Heart right ventricle (tissue), 16 donors: ENCODE measurements at regions of chr3 and their contacts with region 1.

Region 1: DNA sequence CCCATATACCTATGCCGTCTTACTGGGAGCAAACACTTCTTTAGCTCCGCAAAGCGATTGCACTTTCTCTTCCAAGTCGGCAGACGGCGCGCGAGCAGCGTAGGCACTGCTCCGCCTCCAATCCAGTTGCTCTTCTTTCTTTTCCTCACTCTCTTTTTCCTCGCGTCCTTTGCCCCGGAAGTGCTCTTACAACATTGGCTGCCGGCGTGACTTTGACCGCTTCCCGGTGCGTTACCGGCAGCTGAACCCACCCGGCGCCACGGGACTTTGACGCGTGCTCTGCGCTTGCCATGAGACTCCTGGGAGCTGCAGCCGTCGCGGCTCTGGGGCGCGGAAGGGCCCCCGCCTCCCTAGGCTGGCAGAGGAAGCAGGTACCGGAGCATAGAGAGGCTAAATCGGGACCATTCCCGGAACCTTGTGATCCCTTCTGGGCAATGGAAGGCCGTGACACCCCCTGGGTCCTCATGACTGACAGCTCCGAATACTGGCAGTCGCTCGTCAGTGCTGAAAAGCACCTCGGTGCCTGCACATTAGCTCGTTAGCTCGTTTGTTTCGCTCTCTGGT is at the start of gene GFM1:
- DNase-seq: peak; percentile 88 to 94
- ATAC-seq: peak; percentile 96 to 99 (median 98)
- H3K4me3 ChIP-seq: peak within 1 kb of the TSS; percentile 55 to 86 (median 78)
- H3K27ac ChIP-seq: peak within 1 kb of the TSS; percentile 76 to 92 (median 88)
- H3K4me1 ChIP-seq: peaks cover 4 to 40% (median 22%) of the 10 kb centered on the region in 9 donors
- H3K27me3 ChIP-seq: no peaks in the 10 kb centered on the region
- CTCF ChIP-seq: peak; percentile 58 to 97 (median 89)
- total RNA-seq, gene GFM1: 46.9 to 86.4 (median 70.0) TPM

Region 2: DNA sequence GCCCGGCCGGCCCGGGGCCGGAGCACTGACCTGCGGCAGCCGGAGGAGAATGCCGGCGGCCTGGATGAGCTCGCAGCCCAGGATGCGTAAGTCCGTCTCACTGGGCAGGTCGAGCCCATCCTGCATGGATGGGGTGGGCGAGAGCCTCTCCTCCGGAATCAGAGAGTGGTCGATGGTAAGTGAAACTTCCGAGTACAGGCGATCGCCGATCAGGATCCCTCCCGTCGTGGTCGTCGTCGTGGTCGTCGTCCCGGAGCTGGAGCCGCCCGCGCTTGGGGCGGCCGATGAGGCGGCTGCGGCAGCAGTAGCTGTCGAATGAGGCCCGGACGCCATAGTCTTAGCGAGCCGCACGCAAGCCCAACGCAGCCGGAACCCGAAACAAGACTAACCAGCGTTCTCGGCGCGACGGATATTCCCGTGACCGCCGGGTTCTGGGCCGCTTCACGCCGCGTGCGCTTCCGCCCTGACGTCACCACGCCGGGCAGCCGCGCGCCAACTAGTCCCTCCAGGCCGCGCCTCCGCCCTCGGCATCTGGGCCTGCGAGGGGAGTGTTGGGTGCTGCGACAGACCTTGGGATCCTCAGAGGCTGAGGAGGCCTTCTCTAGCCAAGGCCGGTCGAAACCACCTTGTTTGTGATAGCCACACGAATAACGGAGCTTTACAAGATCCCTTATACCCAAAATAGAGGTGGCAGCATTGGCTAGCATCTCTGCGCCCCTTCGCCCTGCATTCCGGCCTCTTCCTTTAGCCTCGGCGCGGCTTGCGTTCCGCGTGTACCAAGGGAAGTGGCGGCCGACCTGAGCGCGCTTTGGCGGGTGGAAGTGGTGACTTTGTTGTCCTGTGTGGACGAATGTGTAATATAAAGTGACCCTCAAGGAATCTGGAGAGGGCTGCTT is 1484.4 kb before region 1 on chr3 and contains the start of gene CCNL1:
- intact Hi-C with region 1: loop called in 1 of 10 experiments (anchors 10 kb)
- DNase-seq: peak; percentile 97
- ATAC-seq: peak; percentile 93 to 97 (median 96)
- H3K4me3 ChIP-seq: peak within 1 kb of the TSS; percentile 87 to 100 (median 96)
- H3K27ac ChIP-seq: peak within 1 kb of the TSS; percentile 97 to 100 (median 100)
- H3K4me1 ChIP-seq: peaks cover 9 to 61% (median 51%) of the 10 kb centered on the region in 9 donors
- H3K27me3 ChIP-seq: no peaks in the 10 kb centered on the region
- CTCF ChIP-seq: no peak
- total RNA-seq, gene CCNL1: 19.1 to 52.5 (median 24.7) TPM

Region 3: GRCh38 chr3:158539414-158540014 is 104.9 kb before region 1 on chr3:
- intact Hi-C with region 1: loop called in 6 of 10 experiments (anchors 5 to 10 kb)
- DNase-seq: peak in 1 of 2 donors; percentile 21
- ATAC-seq: peak in 2 of 8 donors; percentile 37 to 54
- H3K4me3 ChIP-seq: no peak overlapping the region
- H3K27ac ChIP-seq: no peak overlapping the region
- H3K4me1 ChIP-seq: no peaks in the 10 kb centered on the region
- H3K27me3 ChIP-seq: no peaks in the 10 kb centered on the region
- CTCF ChIP-seq: peak; percentile 30 to 73 (median 58)

Region 4: DNA sequence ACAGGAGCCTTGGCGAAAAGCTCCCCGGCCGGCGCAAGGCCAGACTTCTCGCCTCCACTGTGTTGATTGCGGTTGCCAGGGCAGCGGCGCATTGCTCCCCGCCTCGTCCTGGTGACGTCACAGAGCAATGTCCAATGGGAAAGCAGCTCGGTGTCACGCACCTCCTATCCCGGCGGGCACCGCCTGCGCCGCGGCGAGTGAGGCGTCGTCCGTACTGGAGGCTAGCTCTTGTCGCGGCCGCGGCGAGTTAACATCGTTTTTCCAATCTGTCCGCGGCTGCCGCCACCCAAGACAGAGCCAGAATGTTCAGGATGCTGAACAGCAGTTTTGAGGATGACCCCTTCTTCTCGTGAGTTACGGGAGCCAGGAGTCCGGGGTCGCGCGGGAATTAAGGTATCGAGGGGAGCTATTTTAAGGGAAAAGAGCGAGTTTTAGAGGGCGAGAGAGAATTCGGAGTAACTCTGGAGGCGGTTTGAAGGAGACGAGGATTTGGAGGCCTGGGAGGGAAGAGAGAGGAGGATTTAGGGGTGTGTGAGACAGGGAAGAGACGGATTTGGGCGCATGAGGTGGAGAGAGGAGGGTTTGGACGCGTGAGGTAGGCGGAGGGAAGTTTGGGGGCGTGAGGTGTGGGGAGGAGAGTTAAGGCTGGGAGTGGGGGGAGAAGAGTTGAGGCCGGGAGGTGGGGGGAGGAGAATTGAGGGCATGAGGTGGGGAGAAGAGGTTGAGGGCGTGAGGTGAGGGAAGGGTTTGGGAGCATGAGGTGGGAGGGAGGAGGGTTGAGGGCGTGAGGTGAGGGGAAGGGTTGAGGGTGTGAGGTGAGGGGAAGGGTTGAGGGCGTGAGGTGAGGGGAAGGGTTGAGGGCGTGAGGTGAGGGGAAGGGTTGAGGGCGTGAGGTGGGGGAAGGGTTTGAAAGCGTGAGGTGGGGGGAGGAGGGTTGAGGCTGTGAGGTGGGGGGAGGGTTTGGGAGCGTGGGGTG is 73.1 kb before region 1 on chr3 and contains the start of gene MLF1:
- intact Hi-C with region 1: loop called in 4 of 10 experiments (anchors 5 to 10 kb)
- DNase-seq: peak; percentile 97 to 98
- ATAC-seq: peak; percentile 99 to 100 (median 99)
- H3K4me3 ChIP-seq: peak within 1 kb of the TSS; percentile 57 to 92 (median 66)
- H3K27ac ChIP-seq: peak within 1 kb of the TSS; percentile 67 to 91 (median 80)
- H3K4me1 ChIP-seq: peaks cover 0 to 37% (median 14%) of the 10 kb centered on the region in 9 donors
- H3K27me3 ChIP-seq: peaks cover 0 to 16% (median 0%) of the 10 kb centered on the region in 7 donors
- CTCF ChIP-seq: no peak
- total RNA-seq, gene MLF1: 78.4 to 257 (median 121) TPM

Region 5: DNA sequence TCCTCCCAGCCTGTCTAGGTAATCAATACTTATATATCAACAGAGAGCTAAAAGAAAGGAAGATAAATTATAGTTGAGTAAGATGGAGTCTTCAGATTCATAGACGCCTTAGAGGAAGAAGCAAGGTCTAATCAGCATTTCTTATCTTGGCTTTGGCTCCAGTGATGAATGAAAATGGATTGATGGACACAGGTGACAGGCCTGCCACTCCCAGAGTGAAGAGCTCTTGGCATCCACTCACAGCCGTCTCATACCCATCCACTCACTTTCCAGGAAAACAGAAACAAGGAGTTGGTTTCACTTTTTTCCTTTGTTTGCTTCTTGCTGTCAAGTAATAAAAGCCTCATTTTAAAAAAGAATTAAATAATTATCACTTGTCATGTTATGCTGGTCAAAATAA is 325.6 kb after region 1 on chr3:
- intact Hi-C with region 1: no loop called
- DNase-seq: no peak
- ATAC-seq: no peak
- H3K4me3 ChIP-seq: no peak overlapping the region
- H3K27ac ChIP-seq: no peak overlapping the region
- H3K4me1 ChIP-seq: no peaks in the 10 kb centered on the region
- H3K27me3 ChIP-seq: no peaks in the 10 kb centered on the region
- CTCF ChIP-seq: no peak

Region 6: DNA sequence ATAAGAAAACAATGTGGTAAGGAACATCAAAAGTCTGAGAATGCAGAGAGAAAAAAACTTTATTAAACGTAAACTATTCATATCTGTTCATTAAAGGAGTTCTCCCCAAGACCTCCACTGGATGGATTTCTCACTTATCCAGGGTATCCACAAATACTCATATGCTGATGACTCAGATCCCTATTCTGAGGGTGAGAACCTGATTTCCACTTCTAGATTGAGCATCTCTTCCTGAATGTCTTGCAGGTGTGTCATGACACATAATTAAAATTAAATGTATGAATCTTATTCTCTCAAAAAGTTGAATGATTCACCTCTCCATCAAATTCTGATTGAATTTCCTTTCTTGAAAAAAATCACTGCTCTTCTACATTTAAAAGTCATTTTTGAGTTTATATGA is 357.3 kb after region 1 on chr3:
- intact Hi-C with region 1: no loop called
- DNase-seq: no peak
- ATAC-seq: no peak
- H3K4me3 ChIP-seq: no peak overlapping the region
- H3K27ac ChIP-seq: no peak overlapping the region
- H3K4me1 ChIP-seq: no peaks in the 10 kb centered on the region
- H3K27me3 ChIP-seq: no peaks in the 10 kb centered on the region
- CTCF ChIP-seq: no peak